Activated CD8-positive, alpha-beta T cell treated with anti-CD3 and anti-CD28 coated beads, Interleukin-2, amount 10 ng/mL, durations not matched to agents 7 days and 5 days (primary cell): ENCODE measurements at regions of chr9 and their contacts with region 1.

Region 1: GRCh38 chr9:73116031-73116430 is 35.6 kb upstream of the ANXA1 start:
- DNase-seq: no peak
- ATAC-seq: no peak
- H3K4me3 Mint-ChIP-seq: no peak overlapping the region
- H3K27ac Mint-ChIP-seq: no peak overlapping the region
- H3K4me1 Mint-ChIP-seq: peaks cover 31% of the 10 kb centered on the region
- H3K27me3 Mint-ChIP-seq: no peaks in the 10 kb centered on the region

Region 2: GRCh38 chr9:72401396-72401795 is 714.6 kb before region 1 on chr9:
- CTCF ChIA-PET with region 1: no interaction called
- POLR2A ChIA-PET with region 1: no interaction called
- DNase-seq: no peak
- ATAC-seq: no peak
- H3K4me3 Mint-ChIP-seq: no peak overlapping the region
- H3K27ac Mint-ChIP-seq: no peak overlapping the region
- H3K4me1 Mint-ChIP-seq: no peaks in the 10 kb centered on the region
- H3K27me3 Mint-ChIP-seq: peaks cover 5% of the 10 kb centered on the region

Region 3: GRCh38 chr9:73183917-73184861 is 68.2 kb after region 1 on chr9:
- CTCF ChIA-PET with region 1: interaction called, 124 read pairs
- POLR2A ChIA-PET with region 1: no interaction called
- DNase-seq: no peak
- ATAC-seq: no peak
- H3K4me3 Mint-ChIP-seq: no peak overlapping the region
- H3K27ac Mint-ChIP-seq: no peak overlapping the region
- H3K4me1 Mint-ChIP-seq: no peaks in the 10 kb centered on the region
- H3K27me3 Mint-ChIP-seq: peaks cover 16% of the 10 kb centered on the region

Region 4: GRCh38 chr9:73284377-73284776 is 168.3 kb after region 1 on chr9:
- CTCF ChIA-PET with region 1: no interaction called
- POLR2A ChIA-PET with region 1: no interaction called
- DNase-seq: no peak
- ATAC-seq: no peak
- H3K4me3 Mint-ChIP-seq: no peak overlapping the region
- H3K27ac Mint-ChIP-seq: no peak overlapping the region
- H3K4me1 Mint-ChIP-seq: no peaks in the 10 kb centered on the region
- H3K27me3 Mint-ChIP-seq: no peaks in the 10 kb centered on the region